ENCODE measurements at regions of chr5 and their contacts with region 1.

Region 1: GRCh38 chr5:158701406-158702177 is 398.1 kb downstream of the EBF1 start:
- DNase-seq: no peak
- H3K4me3 ChIP-seq: no peak overlapping the region
- H3K27ac ChIP-seq: peak overlapping the region in 2 of 4 donors; percentile 8 to 29
- H3K4me1 ChIP-seq: no peaks in the 10 kb centered on the region
- H3K27me3 ChIP-seq: peaks cover 9% of the 10 kb centered on the region
- CTCF ChIP-seq: no peak
- EP300 ChIP-seq: no peak
- POLR2A ChIP-seq: no peak

Region 2: DNA sequence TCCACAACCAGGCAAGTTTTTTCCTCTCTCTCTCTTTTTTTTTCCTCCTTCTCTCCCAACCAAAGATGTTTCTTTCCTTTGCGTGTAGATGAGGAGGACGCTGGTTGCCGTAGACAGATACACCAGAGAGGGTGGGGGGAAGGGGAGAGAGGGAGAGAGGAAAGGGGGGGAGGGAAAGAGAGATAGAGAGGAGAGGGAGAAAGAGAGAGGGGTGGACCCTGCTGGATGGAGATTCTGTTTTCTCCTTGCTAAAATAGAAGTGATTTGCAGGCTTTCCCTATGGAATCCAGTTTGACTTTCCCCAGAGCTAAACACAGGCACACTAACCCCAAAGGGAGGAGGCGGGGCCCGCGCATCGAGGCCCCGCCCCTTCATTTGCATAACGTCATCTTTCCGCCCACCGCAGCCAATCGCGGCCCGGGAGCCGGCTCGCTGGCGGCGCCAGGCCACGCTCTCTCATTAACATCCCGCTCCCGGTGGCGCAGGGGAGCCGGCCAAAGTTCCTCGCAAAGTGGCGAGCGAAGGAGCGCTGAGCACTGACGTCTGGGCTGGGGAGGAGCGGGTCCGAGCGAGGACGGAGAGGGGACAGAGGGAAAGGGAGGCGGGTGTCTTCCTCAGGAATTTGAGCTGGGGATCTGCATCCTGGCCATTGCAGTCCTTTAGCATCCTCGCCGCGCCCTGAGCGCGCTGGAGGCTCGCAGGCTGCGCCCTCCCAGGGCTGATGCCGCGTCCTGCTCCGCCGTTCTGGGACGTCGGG is 398.6 kb after region 1 on chr5:
- in situ Hi-C with region 1: loop called in 1 of 4 experiments (anchors 10 kb)
- intact Hi-C with region 1: loop called (anchors 5 kb)
- DNase-seq: peak; percentile 80
- H3K4me3 ChIP-seq: peak overlapping the region; percentile 24 to 48 (median 38)
- H3K27ac ChIP-seq: peak overlapping the region; percentile 63 to 76 (median 69)
- H3K4me1 ChIP-seq: peaks cover 0 to 35% (median 15%) of the 10 kb centered on the region in 4 donors
- H3K27me3 ChIP-seq: peaks cover 98% of the 10 kb centered on the region
- CTCF ChIP-seq: no peak
- EP300 ChIP-seq: no peak
- POLR2A ChIP-seq: peak; percentile 62

Measured in transverse colon (tissue), 4 donors.